GM13977 (cell line): ENCODE measurements at regions of chr14 and their contacts with region 1.

Region 1: GRCh38 chr14:52824507-52824906 is 33.1 kb upstream of the GNPNAT1 start:
- DNase-seq: no peak
- CTCF ChIP-seq: no peak

Region 2: GRCh38 chr14:53310412-53310811 is 485.9 kb after region 1 on chr14:
- in situ Hi-C with region 1: loop called (anchors 10 kb)
- DNase-seq: no peak
- CTCF ChIP-seq: no peak